Activated naive CD8-positive, alpha-beta T cell treated with anti-CD3 and anti-CD28 coated beads, Interleukin-2, amount 10 ng/mL, durations not matched to agents 7 days and 5 days (primary cell): ENCODE measurements at regions of chr9 and their contacts with region 1.

Region 1: DNA sequence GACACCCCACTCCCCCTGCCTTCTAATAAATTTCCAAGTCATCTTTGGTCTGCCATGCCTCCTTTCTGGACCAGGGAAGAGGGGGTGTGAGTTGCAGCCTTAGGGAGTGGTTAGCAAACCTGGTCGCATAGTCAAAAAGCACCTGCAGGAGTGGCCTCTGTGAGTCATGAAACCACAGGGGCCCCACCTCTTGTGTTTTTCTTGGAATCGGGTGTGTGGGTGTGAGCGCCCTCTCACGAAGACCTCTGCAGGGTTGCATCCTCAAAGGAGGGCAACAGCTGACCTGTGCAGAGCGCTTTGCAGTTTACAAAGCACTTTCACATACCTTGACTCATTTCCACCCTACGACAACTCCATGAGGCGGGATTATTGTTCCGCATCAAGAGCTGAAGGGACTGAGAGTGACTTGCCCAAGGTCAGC is 36.8 kb upstream of the TEX48 start:
- DNase-seq: peak; percentile 88
- ATAC-seq: peak; percentile 97
- H3K4me3 Mint-ChIP-seq: peak overlapping the region; percentile 69
- H3K27ac Mint-ChIP-seq: peak overlapping the region; percentile 98
- H3K4me1 Mint-ChIP-seq: peaks cover 61% of the 10 kb centered on the region
- H3K27me3 Mint-ChIP-seq: no peaks in the 10 kb centered on the region

Region 2: DNA sequence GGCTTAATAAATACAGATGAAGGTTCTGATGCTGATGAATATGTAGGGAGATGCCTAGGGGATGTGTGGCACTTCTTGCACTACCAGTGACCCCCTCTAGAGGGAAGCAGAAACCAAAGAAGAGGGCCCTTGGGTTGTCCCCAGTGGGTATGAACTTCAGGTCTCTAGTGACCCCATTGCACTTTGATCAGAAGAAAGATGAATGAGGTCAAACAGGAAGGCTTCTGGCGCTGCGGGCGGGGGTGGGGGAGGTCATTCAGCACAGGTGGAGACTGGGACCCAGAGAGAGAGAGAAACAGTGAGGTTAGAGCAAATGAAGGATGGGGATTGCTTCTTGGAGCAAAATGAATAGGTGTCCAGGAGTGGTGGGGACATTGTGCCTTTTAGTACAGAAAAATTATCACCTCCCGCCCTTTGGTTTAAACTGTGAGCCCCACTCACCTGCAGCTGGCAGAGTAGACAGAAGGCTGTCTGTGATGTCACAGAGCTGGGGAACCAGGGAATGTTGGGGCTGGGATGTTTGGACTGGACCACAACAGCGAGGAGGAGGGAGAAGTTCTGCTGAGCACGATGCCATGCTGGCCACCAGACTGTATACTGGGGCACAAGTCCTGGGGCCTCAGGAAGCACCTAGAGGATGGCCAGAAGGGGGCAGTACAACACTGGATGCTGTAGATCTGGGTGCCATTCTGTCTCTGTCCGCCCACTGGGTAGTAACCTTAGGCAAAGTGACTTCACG is 37.0 kb before region 1 on chr9 and contains the start of gene TEX48:
- POLR2A ChIA-PET with region 1: interaction called, 16 read pairs
- DNase-seq: peak; percentile 73
- ATAC-seq: peak; percentile 93
- H3K4me3 Mint-ChIP-seq: peak within 1 kb of the TSS; percentile 73
- H3K27ac Mint-ChIP-seq: peak within 1 kb of the TSS; percentile 93
- H3K4me1 Mint-ChIP-seq: peaks cover 41% of the 10 kb centered on the region
- H3K27me3 Mint-ChIP-seq: no peaks in the 10 kb centered on the region
- total RNA-seq, gene TEX48: not detected

Region 3: GRCh38 chr9:114691046-114691955 is 27.5 kb before region 1 on chr9:
- POLR2A ChIA-PET with region 1: interaction called, 89 read pairs
- DNase-seq: peak; percentile 57
- ATAC-seq: peak; percentile 93
- H3K4me3 Mint-ChIP-seq: peak overlapping the region; percentile 38
- H3K27ac Mint-ChIP-seq: peak overlapping the region; percentile 99
- H3K4me1 Mint-ChIP-seq: peaks cover 82% of the 10 kb centered on the region
- H3K27me3 Mint-ChIP-seq: no peaks in the 10 kb centered on the region

Region 4: DNA sequence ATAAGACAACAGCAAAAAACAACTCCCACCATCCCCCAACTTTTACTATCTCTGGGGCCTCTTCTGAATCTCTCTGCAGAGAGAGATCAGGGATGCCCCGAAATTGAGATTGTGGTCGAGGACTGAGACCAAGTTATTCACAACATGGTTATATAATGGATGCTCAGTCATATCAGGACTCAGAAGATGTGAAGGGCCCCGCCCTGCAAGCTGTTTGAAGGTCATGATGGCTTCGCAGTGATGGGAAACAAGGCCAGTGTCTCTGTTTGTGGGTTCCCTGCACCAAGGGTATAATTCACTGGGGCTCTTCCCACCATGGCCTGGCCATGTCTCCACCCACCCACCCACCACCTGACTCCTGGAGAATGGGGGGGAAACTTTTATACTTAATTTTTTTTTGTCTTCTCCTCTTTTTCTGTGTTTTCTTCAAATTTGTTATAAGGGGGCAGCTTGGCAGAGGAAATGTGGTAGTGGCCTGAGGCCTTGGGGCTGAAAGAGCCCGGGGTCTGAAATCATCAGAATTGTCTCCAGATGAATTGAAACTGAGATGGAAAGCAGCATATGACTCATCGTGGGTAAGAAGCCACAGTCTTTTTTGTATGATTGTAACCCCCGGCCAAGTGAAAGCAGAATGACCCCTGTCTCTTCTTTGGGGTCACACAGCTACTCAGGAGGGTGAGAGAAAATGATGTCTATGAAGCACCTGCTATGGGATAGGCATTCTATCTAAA is 21.8 kb before region 1 on chr9:
- POLR2A ChIA-PET with region 1: interaction called, 89 read pairs
- DNase-seq: peak; percentile 63
- ATAC-seq: peak; percentile 81
- H3K4me3 Mint-ChIP-seq: peak overlapping the region; percentile 63
- H3K27ac Mint-ChIP-seq: peak overlapping the region; percentile 100
- H3K4me1 Mint-ChIP-seq: peaks cover 77% of the 10 kb centered on the region
- H3K27me3 Mint-ChIP-seq: no peaks in the 10 kb centered on the region

Region 5: GRCh38 chr9:114706711-114707110 is 12.1 kb before region 1 on chr9:
- POLR2A ChIA-PET with region 1: interaction called, 21 read pairs
- DNase-seq: no peak
- ATAC-seq: no peak
- H3K4me3 Mint-ChIP-seq: no peak overlapping the region
- H3K27ac Mint-ChIP-seq: peak overlapping the region; percentile 28
- H3K4me1 Mint-ChIP-seq: peaks cover 53% of the 10 kb centered on the region
- H3K27me3 Mint-ChIP-seq: no peaks in the 10 kb centered on the region